HCT116 (cell line): ENCODE measurements at regions of chr4 and their contacts with region 1.

Region 1: DNA sequence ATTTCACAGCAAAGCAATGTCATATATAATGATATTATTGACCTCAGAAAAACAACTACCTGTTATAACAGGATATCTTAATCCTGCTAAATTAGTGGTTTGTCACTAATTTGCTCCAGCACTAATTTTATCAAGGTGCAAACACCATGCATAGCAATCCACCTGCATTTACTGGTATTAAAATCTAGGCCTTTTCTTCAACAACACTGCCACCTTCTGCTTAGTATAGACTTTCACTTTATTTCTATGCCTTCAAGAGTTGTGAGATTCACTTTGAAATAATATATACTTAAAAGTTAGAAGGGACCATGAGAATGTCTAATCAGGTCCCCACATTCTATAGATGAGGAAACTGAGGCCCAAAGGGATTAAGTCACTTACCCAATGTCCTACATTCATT is 82.1 kb upstream of the IQCM start:
- DNase-seq: peak; percentile 22
- ATAC-seq: peak; percentile 74
- H3K4me3 ChIP-seq: no peak overlapping the region
- H3K27ac ChIP-seq: no peak overlapping the region
- H3K4me1 ChIP-seq: no peaks in the 10 kb centered on the region
- H3K27me3 ChIP-seq: no peaks in the 10 kb centered on the region
- CTCF ChIP-seq: peak in 2 of 3 experiments; percentile 55 to 58; a peak in 3 of 6 replicates
- POLR2A ChIP-seq: no peak
- RAD21 ChIP-seq: peak; percentile 81

Region 2: DNA sequence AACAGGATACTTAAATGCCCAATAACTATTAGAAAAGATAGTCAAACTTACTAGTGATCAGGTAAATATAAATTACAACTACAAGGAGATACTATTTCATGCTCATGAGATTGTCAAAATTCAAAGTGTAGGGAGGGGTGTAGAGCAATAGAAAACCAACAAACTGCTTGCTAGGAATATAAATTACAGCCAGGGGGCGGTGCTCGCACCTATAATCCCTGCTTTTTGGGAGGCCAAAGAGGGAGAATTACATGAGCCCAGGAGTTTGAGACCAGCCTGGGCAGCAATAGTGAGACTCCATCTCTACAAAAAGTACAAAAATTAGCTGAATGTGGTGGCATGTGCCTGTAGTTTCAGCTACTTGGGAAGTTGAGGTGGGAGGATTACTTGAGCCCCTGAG is 899.1 kb before region 1 on chr4:
- CTCF ChIA-PET with region 1: no interaction called
- POLR2A ChIA-PET with region 1: no interaction called
- RAD21 ChIA-PET with region 1: no interaction called
- intact Hi-C with region 1: loop called (anchors 5 kb)
- DNase-seq: peak; percentile 24
- ATAC-seq: peak; percentile 85
- H3K4me3 ChIP-seq: no peak overlapping the region
- H3K27ac ChIP-seq: no peak overlapping the region
- H3K4me1 ChIP-seq: no peaks in the 10 kb centered on the region
- H3K27me3 ChIP-seq: no peaks in the 10 kb centered on the region
- CTCF ChIP-seq: peak; percentile 25 to 74 (median 53); a peak in 5 of 6 replicates
- POLR2A ChIP-seq: no peak
- RAD21 ChIP-seq: peak; percentile 69

Region 3: GRCh38 chr4:149370785-149371420 is 526.9 kb before region 1 on chr4:
- CTCF ChIA-PET with region 1: interaction called, 10 read pairs
- POLR2A ChIA-PET with region 1: no interaction called
- RAD21 ChIA-PET with region 1: interaction called in 1 of 2 experiments, 4 read pairs
- intact Hi-C with region 1: loop called (anchors 1 kb)
- DNase-seq: peak; percentile 67
- ATAC-seq: peak; percentile 96
- H3K4me3 ChIP-seq: no peak overlapping the region
- H3K27ac ChIP-seq: no peak overlapping the region
- H3K4me1 ChIP-seq: no peaks in the 10 kb centered on the region
- H3K27me3 ChIP-seq: no peaks in the 10 kb centered on the region
- CTCF ChIP-seq: peak; percentile 34 to 64 (median 63); a peak in 5 of 6 replicates
- POLR2A ChIP-seq: no peak
- RAD21 ChIP-seq: peak; percentile 81

Region 4: DNA sequence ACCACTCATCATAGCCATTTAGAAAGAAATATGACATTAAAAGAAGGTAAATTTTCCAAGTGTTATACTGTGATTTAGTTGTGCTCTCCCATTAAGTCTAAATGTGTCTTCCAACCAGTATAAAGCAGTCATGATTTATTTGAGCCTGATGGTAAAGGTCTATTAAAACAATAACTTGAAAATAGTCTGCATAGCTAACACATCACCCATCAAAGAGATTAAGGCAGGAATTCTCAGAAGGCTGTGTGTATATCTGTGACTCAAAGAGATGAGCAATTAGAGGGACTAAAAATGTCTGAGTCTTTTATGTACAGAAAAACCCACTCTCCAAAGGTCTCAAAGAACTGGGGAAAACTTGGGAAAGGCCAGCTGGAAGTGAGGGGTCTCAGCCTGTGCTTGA is 11.9 kb before region 1 on chr4:
- CTCF ChIA-PET with region 1: no interaction called
- POLR2A ChIA-PET with region 1: no interaction called
- RAD21 ChIA-PET with region 1: no interaction called
- intact Hi-C with region 1: no loop called
- DNase-seq: no peak
- ATAC-seq: peak; percentile 27; the same call in 1 of the 2 replicates
- H3K4me3 ChIP-seq: no peak overlapping the region
- H3K27ac ChIP-seq: no peak overlapping the region
- H3K4me1 ChIP-seq: peaks cover 0 to 18% of the 10 kb centered on the region in 2 experiments; a peak in 2 of 4 replicates
- H3K27me3 ChIP-seq: no peaks in the 10 kb centered on the region
- CTCF ChIP-seq: no peak
- POLR2A ChIP-seq: no peak
- RAD21 ChIP-seq: no peak